Spleen (tissue), 13 donors: ENCODE measurements at regions of chr6 and their contacts with region 1.

Region 1: DNA sequence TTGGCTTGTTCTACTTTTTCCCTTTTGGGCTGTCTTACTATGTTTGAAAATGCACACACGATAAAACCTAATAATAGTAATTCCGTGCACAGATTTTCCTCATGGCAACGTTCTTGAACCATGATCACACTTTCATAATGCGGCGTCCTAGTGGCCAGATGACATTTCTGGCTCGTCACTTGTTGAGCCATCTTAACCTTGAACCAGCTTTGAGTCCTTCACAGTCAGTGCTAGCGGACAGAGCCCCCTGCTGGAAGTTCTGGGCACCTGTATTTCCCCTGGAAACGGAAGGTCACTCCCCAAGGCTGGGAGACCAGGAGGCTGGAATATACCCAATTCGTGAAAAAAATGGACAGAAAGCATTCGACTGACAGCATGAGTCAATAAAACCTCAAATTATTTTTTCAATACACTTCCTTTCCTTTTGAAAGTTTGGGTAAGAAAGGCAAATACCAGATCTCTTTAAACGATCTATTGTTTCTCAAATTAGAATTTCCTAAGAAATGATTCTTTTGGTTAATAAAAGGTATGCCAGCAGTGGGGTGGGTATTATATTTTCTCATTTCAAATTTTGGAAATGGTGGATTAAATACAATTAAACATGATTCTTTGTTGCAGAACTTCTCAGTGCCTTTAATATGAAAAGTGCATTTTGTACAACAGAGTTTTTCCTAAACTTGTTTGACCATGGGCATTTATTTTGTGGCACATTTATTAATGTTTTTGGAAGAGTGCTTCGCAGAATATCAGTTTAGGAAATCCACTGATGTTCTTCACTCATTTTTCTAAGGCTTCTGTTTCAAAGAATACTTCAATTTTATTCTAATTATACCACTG is 542.3 kb downstream of the QKI start:
- DNase-seq: peak; percentile 84
- H3K4me3 ChIP-seq: no peak overlapping the region
- H3K27ac ChIP-seq: no peak overlapping the region
- H3K4me1 ChIP-seq: peaks cover 0 to 11% (median 6%) of the 10 kb centered on the region in 6 donors
- H3K27me3 ChIP-seq: peaks cover 0 to 19% (median 0%) of the 10 kb centered on the region in 7 donors
- CTCF ChIP-seq: peak; percentile 73 to 95 (median 86)
- POLR2A ChIP-seq: no peak

Region 2: GRCh38 chr6:163427498-163428254 is 529.1 kb before region 1 on chr6:
- intact Hi-C with region 1: loop called (anchors 10 kb)
- DNase-seq: no peak
- H3K4me3 ChIP-seq: no peak overlapping the region
- H3K27ac ChIP-seq: no peak overlapping the region
- H3K4me1 ChIP-seq: peaks cover 5 to 100% (median 82%) of the 10 kb centered on the region in 6 donors
- H3K27me3 ChIP-seq: no peaks in the 10 kb centered on the region
- CTCF ChIP-seq: peak in 6 of 11 experiments; percentile 33 to 44 (median 40)
- POLR2A ChIP-seq: no peak

Region 3: DNA sequence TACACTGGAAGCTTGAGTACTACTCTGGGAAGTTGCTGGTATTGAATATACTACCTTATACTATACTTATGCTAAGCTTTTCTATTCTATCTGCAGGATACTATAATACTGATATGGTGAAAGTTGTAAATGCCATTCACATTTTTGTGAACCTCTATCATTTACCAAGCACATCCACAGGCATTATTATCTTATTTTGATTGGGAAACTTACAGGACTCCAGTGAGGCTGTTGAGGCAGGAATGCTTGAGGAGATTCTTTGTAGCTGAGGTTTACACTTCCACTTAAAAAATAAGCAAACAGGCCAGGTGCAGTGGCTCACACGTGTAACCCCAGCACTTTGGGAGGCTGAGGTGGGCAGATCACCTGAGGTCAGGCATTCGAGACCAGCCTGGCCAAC is 99.4 kb before region 1 on chr6:
- intact Hi-C with region 1: no loop called
- DNase-seq: no peak
- H3K4me3 ChIP-seq: no peak overlapping the region
- H3K27ac ChIP-seq: no peak overlapping the region
- H3K4me1 ChIP-seq: peaks cover 0 to 13% (median 8%) of the 10 kb centered on the region in 6 donors
- H3K27me3 ChIP-seq: peaks cover 0 to 25% (median 0%) of the 10 kb centered on the region in 7 donors
- CTCF ChIP-seq: no peak
- POLR2A ChIP-seq: no peak

Region 4: DNA sequence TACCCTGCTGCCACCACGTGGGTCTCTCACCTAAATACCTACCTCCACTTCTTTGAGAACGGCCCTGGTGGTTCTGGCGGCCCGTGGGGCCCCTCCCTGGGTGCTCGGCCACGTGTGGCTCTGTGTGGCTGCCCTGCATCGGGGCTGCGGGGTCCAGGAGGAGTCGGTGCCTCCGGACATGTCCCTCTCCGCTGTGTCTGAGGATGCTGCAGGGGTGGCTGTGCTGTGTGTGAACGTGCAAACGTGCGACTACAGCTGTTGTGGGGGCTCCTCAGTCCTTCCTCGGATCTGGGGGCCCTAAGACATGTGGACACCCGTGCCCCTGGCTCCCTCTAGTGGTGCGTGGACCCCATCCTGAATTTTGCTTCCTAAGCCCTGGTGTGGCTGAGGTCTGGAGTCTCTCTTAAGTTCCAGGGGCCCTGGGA is 149.6 kb after region 1 on chr6:
- intact Hi-C with region 1: no loop called
- DNase-seq: no peak
- H3K4me3 ChIP-seq: no peak overlapping the region
- H3K27ac ChIP-seq: no peak overlapping the region
- H3K4me1 ChIP-seq: peaks cover 0 to 18% (median 14%) of the 10 kb centered on the region in 6 donors
- H3K27me3 ChIP-seq: peaks cover 0 to 18% (median 0%) of the 10 kb centered on the region in 7 donors
- CTCF ChIP-seq: peak in 5 of 11 experiments; percentile 19 to 38 (median 34)
- POLR2A ChIP-seq: no peak